Mucosa of descending colon (tissue), 3 donors: ENCODE measurements at regions of chr14 and their contacts with region 1.

Region 1: DNA sequence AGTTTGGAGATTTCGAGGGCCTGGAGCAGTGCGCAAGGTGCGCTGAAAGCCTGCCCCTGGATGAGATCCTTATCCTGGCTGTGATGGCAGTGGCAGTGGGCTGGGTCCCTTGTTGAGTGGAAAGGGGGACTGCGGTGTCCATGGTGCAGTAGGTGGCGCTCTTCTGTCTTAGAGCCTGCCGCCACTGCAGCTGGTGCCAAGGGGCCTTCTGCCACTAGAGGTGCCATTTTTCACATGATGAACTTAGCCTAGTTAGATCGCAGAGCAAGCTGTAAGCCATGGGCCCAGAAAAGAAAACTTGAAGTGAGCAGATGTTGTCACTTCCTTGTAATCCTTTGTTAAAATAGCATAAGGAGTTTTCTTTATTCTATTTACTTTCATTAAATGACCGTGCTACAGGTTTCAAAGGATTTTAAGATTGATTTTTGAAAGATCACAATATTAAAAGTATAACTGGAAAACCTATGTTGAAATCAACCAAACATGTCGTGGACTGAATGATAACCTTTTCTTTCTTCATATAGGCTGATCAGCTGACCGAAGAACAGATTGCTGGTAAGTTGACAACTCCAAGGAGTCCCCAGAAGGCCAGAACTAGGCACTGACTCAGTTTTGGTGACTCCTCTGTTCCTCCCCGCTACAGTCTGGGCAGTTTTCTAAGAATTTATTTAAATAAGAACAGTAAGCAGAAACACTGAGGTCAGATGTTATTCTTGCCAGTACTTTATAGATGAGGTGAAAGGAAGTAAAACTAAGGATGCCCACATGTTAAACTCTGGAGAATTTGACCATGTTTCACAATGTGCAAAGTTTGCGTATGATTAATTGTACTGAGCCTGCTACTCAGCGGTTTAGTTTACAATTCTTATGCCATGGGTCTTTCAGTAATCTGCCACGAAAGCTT is 3.0 kb downstream of the CALM1 start:
- DNase-seq: peak; percentile 87 to 97 (median 89)
- ATAC-seq: peak; percentile 71
- H3K4me3 ChIP-seq: no peak overlapping the region
- H3K4me1 ChIP-seq: peaks cover 18% of the 10 kb centered on the region
- CTCF ChIP-seq: peak; percentile 98

Region 2: DNA sequence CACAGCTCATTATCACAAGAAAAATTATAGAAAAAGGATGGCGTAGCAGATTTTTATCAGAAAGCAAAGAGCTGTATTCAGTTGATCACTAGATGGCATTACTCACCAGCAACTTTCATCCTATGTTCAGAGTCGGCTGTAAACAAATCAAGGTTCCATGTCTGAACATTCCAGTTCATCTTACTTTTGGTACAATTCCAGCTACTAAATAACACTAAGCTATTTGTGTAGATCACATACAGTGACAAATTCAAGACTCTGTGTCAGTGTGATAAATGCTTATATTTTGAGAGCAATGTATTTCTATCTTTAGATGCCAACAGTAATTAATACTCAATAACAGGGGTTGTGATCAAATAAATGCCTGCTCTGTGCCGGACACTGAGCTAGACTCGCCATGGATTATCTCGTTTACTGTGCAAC is 98.1 kb before region 1 on chr14:
- intact Hi-C with region 1: loop called in 1 of 2 experiments (anchors 2 kb)
- DNase-seq: no peak
- ATAC-seq: peak; percentile 66
- H3K4me3 ChIP-seq: no peak overlapping the region
- H3K4me1 ChIP-seq: peaks cover 18% of the 10 kb centered on the region
- CTCF ChIP-seq: peak; percentile 31

Region 3: GRCh38 chr14:90331497-90332435 is 68.0 kb before region 1 on chr14 and contains the start of gene NRDE2:
- intact Hi-C with region 1: no loop called
- DNase-seq: peak; percentile 100
- ATAC-seq: peak; percentile 100
- H3K4me3 ChIP-seq: peak within 1 kb of the TSS; percentile 35
- H3K4me1 ChIP-seq: peaks cover 12% of the 10 kb centered on the region
- CTCF ChIP-seq: no peak
- total RNA-seq, gene NRDE2: 23.0 to 31.5 (median 26.1) TPM

Region 4: DNA sequence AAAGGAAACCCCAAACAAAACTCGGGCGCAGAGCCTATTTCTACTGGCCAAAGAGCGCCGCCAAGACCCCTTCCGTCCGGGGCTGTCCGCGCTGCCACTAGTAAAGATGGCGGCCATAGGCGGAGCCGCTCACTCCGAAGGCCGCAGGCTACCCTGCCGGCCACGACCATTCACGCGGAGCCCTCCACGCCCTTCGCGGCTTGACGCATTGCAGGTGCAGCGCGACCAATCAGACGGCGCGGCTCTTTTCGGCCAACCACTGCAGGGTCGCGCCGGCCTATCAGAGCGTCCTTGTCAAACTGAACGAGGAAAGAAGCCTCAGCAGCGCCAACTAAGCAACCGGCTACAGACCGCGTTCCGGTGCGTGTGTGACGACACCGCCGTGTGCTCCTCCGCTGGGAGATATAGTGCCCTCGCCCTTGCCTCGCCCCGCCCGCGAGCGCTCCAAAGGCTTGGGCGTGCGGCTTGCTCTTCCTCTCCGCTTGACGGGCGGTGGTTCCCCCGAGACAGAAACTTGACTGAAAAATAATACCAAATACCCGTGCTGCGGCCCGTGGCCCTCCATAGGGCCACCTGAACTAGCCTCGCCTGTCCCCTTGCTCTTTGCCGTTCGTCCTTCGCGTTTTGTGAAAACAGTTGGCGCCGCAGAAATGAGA is 16.6 kb before region 1 on chr14:
- intact Hi-C with region 1: loop called in 1 of 2 experiments (anchors 1 kb)
- DNase-seq: peak; percentile 99 to 100 (median 99)
- ATAC-seq: peak; percentile 90
- H3K4me3 ChIP-seq: peak overlapping the region; percentile 53
- H3K4me1 ChIP-seq: peaks cover 18% of the 10 kb centered on the region
- CTCF ChIP-seq: peak; percentile 33

Region 5: GRCh38 chr14:90518941-90519256 is 119.1 kb after region 1 on chr14:
- intact Hi-C with region 1: loop called (anchors 10 kb)
- DNase-seq: peak in 2 of 3 donors; percentile 52 to 53
- ATAC-seq: peak; percentile 60
- H3K4me3 ChIP-seq: no peak overlapping the region
- H3K4me1 ChIP-seq: peaks cover 40% of the 10 kb centered on the region
- CTCF ChIP-seq: peak; percentile 42

Region 6: DNA sequence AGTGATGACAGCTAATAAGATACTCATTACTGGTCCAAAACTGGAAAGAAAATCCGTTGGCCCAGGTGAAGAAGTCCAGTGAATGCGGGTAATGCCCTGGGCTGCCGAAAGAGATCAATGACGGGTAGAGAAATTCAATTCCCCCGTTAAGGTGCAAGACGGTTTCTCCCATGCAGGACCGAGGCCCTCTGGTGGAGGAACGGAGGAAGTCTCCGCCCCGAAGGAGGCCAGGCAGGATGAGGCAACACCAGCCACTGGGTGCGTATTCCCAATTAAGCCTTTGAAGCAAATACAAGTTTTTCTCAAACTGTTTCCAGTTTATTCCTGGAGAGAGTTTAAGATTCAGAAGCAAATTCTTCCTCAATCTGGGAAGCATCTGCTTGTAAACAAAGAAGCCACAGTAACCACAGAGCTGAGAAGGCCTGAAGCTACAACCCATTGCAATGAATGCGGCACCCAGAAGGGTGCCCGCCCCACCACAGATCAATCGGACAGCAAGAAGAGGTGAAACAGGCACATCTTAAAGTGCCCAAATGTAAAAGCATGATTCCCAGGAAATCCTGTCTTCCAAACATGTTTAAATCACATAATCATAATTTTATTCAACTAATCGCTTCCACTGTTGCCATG is 297.9 kb after region 1 on chr14:
- intact Hi-C with region 1: loop called in 1 of 2 experiments (anchors 5 kb)
- DNase-seq: peak; percentile 79 to 86 (median 84)
- ATAC-seq: peak; percentile 97
- H3K4me3 ChIP-seq: no peak overlapping the region
- H3K4me1 ChIP-seq: no peaks in the 10 kb centered on the region
- CTCF ChIP-seq: peak; percentile 86